ENCODE measurements at regions of chr13 and their contacts with region 1.

Region 1: DNA sequence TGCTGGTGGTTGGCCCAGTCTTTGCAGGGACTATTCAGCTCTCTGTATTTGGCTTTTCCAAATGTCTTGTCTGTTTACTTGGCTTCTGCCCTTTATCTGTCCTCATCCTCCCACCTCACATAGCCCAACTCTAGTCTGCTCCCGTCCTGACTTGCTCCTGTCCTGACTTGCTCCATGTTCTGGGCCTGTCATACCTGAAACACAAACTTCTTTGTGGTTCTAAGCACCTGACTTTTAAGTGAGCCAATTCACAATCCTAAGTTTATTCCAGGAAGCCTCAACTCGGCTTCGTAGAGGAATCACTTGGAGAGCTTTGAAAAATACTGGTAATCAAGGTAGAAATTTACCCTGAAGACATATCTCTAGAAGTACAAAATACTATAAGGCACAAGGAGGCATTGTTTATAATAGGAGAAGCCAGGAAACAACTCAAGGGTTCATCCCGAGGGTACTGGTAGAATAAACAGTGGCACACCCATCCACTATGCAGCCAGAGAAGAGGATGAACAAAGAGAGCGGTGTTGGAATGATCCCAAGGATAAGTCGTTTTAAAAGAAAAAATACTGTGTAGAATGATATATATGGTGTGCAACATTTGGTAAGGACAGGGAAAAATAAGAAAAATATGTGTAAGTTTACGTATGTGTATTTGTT is 284.5 kb downstream of the FGF14 start:
- DNase-seq: peak; percentile 87
- H3K4me3 ChIP-seq: peak overlapping the region in 2 of 3 experiments; percentile 24 to 25
- H3K27ac ChIP-seq: peak overlapping the region; percentile 71
- H3K4me1 ChIP-seq: peaks cover 10% of the 10 kb centered on the region
- H3K27me3 ChIP-seq: no peaks in the 10 kb centered on the region
- CTCF ChIP-seq: no peak

Region 2: GRCh38 chr13:102091231-102091630 is 26.1 kb before region 1 on chr13:
- CTCF ChIA-PET with region 1: no interaction called
- dilution Hi-C with region 1: no loop called
- in situ Hi-C with region 1: no loop called
- intact Hi-C with region 1: loop called (anchors 2 kb)
- DNase-seq: peak; percentile 49
- H3K4me3 ChIP-seq: no peak overlapping the region
- H3K27ac ChIP-seq: no peak overlapping the region
- H3K4me1 ChIP-seq: no peaks in the 10 kb centered on the region
- H3K27me3 ChIP-seq: no peaks in the 10 kb centered on the region
- CTCF ChIP-seq: peak; percentile 21 to 22

Region 3: GRCh38 chr13:102128216-102128810 is 11.0 kb after region 1 on chr13:
- CTCF ChIA-PET with region 1: no interaction called
- dilution Hi-C with region 1: no loop called
- in situ Hi-C with region 1: no loop called
- intact Hi-C with region 1: no loop called
- DNase-seq: peak; percentile 93
- H3K4me3 ChIP-seq: no peak overlapping the region
- H3K27ac ChIP-seq: peak overlapping the region; percentile 41
- H3K4me1 ChIP-seq: peaks cover 20% of the 10 kb centered on the region
- H3K27me3 ChIP-seq: no peaks in the 10 kb centered on the region
- CTCF ChIP-seq: no peak

Measured in mammary epithelial cell (primary cell).